Panc1 (cell line): ENCODE measurements at regions of chr1 and their contacts with region 1.

Region 1: GRCh38 chr1:157193702-157194391 is 55.7 kb upstream of the ETV3 start:
- DNase-seq: peak; percentile 30
- ATAC-seq: peak; percentile 75
- H3K4me3 ChIP-seq: no peak overlapping the region
- H3K27ac ChIP-seq: no peak overlapping the region
- H3K4me1 ChIP-seq: no peaks in the 10 kb centered on the region
- H3K27me3 ChIP-seq: peaks cover 10% of the 10 kb centered on the region
- CTCF ChIP-seq: peak; percentile 95

Region 2: DNA sequence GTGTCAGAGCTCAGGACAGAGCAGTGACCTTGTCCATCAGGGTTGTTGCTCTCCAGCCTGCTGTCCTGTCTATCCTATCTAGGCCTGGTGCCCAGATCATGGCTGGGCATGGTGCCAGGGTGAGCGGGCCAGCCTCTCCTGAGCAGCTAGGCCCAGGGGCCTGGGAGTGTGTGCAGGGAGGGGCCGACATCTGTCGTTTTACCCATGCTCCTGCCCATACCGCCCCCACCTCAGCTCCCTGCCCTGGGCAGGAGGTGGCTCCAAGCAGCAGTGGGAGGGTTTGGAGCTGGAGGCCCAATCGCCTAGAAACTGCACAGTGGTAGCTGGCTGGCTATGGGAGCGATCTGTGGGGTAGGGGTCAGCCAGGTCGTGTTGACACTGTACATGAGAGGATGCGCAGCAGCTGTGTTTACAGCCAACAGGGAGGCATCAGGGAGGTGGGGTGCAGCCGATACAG is 341.4 kb before region 1 on chr1:
- CTCF ChIA-PET with region 1: no interaction called
- POLR2A ChIA-PET with region 1: no interaction called
- in situ Hi-C with region 1: no loop called
- intact Hi-C with region 1: no loop called
- DNase-seq: no peak
- ATAC-seq: no peak
- H3K4me3 ChIP-seq: no peak overlapping the region
- H3K27ac ChIP-seq: no peak overlapping the region
- H3K4me1 ChIP-seq: no peaks in the 10 kb centered on the region
- H3K27me3 ChIP-seq: no peaks in the 10 kb centered on the region
- CTCF ChIP-seq: no peak

Region 3: DNA sequence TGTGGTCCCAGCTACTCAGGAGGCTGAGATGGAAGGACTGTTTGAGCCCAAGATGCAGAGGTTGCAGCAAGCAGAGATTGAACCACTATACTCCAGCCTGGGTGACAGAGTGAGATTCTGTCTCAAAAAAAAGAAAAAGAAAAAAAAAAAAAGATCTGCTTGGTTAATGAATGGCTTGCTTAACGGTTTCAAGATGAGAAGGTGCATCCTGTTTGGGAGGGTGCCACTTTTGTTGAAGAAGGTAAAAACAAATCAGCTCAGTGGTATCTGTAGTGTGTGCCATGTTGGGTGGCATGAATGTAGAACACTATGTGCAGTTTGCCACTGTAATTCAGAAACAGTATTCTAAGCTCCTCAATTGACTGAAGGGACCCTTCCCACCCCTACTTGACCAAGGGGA is 39.3 kb after region 1 on chr1:
- CTCF ChIA-PET with region 1: no interaction called
- POLR2A ChIA-PET with region 1: no interaction called
- in situ Hi-C with region 1: no loop called
- intact Hi-C with region 1: no loop called
- DNase-seq: no peak
- ATAC-seq: no peak
- H3K4me3 ChIP-seq: no peak overlapping the region
- H3K27ac ChIP-seq: no peak overlapping the region
- H3K4me1 ChIP-seq: no peaks in the 10 kb centered on the region
- H3K27me3 ChIP-seq: peaks cover 2% of the 10 kb centered on the region; the same call in 1 of the 2 replicates
- CTCF ChIP-seq: no peak

Region 4: DNA sequence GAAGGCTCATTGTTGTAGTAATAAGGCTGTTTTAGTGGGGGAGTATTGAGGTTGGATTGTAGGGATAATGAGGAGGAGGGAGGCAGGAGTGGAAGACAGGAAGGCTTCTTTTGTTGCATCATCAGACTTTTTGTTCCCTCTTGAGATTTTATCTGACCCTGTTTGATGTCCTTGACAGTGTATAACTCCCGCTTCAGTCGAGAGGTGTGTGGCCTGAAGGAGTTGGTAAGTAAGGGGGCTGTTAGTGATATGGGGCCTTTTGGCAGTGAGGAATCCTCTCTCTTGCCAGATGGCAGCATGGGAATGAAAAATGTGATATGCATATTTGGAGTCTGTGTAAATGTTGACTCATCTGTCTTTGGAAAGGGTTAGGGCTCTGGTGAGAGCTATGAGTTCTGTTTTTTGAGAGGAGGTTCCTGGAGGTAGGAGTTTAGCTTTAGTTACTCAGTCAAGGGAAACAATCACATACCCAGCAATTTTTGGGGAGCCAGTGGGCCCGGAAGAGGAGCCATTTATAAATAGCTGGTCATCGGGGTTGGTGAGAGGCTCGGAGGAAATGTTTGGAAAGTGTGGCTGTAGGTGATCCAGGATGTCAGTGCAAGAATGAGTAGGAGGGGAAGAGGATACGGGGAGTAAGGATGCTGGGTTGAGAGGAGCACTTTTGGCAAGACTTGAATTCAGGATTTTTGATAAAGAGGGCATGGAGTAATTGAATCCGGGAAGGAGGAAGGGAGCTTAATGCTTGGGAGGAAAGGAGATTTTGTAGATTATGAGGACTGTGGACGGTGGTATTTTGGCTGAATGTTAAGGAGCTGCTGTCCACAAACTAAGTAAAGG is 81.1 kb after region 1 on chr1:
- CTCF ChIA-PET with region 1: no interaction called
- POLR2A ChIA-PET with region 1: no interaction called
- in situ Hi-C with region 1: no loop called
- intact Hi-C with region 1: no loop called
- DNase-seq: no peak
- ATAC-seq: no peak
- H3K4me3 ChIP-seq: no peak overlapping the region
- H3K27ac ChIP-seq: no peak overlapping the region
- H3K4me1 ChIP-seq: no peaks in the 10 kb centered on the region
- H3K27me3 ChIP-seq: peaks cover 4% of the 10 kb centered on the region; the same call in 1 of the 2 replicates
- CTCF ChIP-seq: no peak

Region 5: DNA sequence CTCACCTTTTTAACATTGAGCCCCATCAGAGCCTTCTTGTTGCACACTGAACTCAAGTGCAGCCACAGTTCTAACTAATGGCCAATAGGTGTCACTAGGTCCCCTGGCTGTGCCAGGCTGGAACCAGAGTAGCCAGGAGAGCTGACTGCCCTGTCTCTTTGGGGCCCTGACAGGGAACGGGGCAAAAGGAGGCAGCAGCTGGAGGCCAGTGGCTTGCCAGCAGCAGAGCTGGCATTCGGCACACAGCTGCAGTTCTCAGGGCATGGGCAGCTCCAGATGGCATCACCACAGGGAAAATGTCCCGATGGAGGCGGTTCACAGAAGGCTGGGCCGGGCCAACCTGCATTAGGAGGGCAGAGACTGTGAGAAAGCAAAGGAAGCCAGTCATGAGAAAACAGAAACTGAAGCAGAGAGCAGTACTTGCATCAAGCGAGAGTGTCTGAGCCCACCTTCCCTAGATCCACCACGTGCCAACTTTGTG is 169.9 kb after region 1 on chr1:
- CTCF ChIA-PET with region 1: no interaction called
- POLR2A ChIA-PET with region 1: no interaction called
- in situ Hi-C with region 1: no loop called
- intact Hi-C with region 1: loop called (anchors 5 kb)
- DNase-seq: peak; percentile 17
- ATAC-seq: peak; percentile 94
- H3K4me3 ChIP-seq: no peak overlapping the region
- H3K27ac ChIP-seq: no peak overlapping the region
- H3K4me1 ChIP-seq: no peaks in the 10 kb centered on the region
- H3K27me3 ChIP-seq: no peaks in the 10 kb centered on the region; the same call in 1 of the 2 replicates
- CTCF ChIP-seq: peak; percentile 82

Region 6: GRCh38 chr1:157542676-157543075 is 348.8 kb after region 1 on chr1:
- CTCF ChIA-PET with region 1: no interaction called
- POLR2A ChIA-PET with region 1: no interaction called
- in situ Hi-C with region 1: no loop called
- intact Hi-C with region 1: no loop called
- DNase-seq: no peak
- ATAC-seq: no peak
- H3K4me3 ChIP-seq: no peak overlapping the region
- H3K27ac ChIP-seq: no peak overlapping the region
- H3K4me1 ChIP-seq: no peaks in the 10 kb centered on the region
- H3K27me3 ChIP-seq: no peaks in the 10 kb centered on the region; the same call in 1 of the 2 replicates
- CTCF ChIP-seq: no peak